ENCODE measurements at regions of chr1 and their contacts with region 1.

Region 1: GRCh38 chr1:234373064-234373958 is at the start of gene COA6:
- DNase-seq: peak; percentile 72 to 98 (median 88)
- ATAC-seq: peak; percentile 84 to 85
- H3K4me3 Mint-ChIP-seq: peak within 1 kb of the TSS; percentile 94 to 99 (median 97)
- H3K27ac Mint-ChIP-seq: peak within 1 kb of the TSS; percentile 96 to 100 (median 99)
- H3K4me1 Mint-ChIP-seq: peaks cover 19 to 54% (median 49%) of the 10 kb centered on the region in 4 donors
- H3K27me3 Mint-ChIP-seq: no peaks in the 10 kb centered on the region
- polyA plus RNA-seq, gene COA6: 29.1 to 32.6 (median 32.0) TPM

Region 2: GRCh38 chr1:234135501-234135900 is 237.8 kb before region 1 on chr1:
- POLR2A ChIA-PET with region 1: no interaction called
- DNase-seq: no peak
- ATAC-seq: no peak
- H3K4me3 Mint-ChIP-seq: no peak overlapping the region
- H3K27ac Mint-ChIP-seq: no peak overlapping the region
- H3K4me1 Mint-ChIP-seq: no peaks in the 10 kb centered on the region
- H3K27me3 Mint-ChIP-seq: peaks cover 5 to 11% (median 10%) of the 10 kb centered on the region in 5 donors

Region 3: GRCh38 chr1:234222561-234223280 is 150.6 kb before region 1 on chr1:
- POLR2A ChIA-PET with region 1: no interaction called
- DNase-seq: no peak
- ATAC-seq: no peak
- H3K4me3 Mint-ChIP-seq: no peak overlapping the region
- H3K27ac Mint-ChIP-seq: no peak overlapping the region
- H3K4me1 Mint-ChIP-seq: peaks cover 0 to 2% (median under 1%) of the 10 kb centered on the region in 4 donors
- H3K27me3 Mint-ChIP-seq: peaks cover 3 to 12% (median 6%) of the 10 kb centered on the region in 5 donors

Region 4: DNA sequence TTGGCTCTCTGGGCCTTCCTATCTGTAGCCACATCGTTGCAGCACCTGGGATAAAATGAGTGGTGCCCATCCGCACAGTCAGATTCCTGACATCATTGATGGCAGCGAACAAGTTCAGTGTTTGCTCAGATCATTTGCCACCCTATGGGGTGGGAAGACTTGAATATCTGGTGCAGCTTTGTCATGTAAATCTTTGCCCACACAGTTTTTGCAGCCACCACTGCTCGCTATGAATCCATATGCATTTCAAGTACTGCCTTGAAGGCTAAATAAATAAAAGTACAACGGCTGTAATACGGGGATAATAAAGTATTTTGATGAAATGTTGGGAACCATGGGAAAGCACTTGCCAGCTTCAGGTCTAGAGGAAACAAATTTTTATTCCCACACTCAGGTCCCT is 56.4 kb before region 1 on chr1:
- POLR2A ChIA-PET with region 1: interaction called, 12 read pairs
- DNase-seq: no peak
- ATAC-seq: no peak
- H3K4me3 Mint-ChIP-seq: peak overlapping the region in 1 of 10 donors; percentile 29
- H3K27ac Mint-ChIP-seq: peak overlapping the region in 8 of 10 donors; percentile 37 to 99 (median 96)
- H3K4me1 Mint-ChIP-seq: peaks cover 16 to 66% (median 60%) of the 10 kb centered on the region in 4 donors
- H3K27me3 Mint-ChIP-seq: peaks cover 0 to 7% (median 0%) of the 10 kb centered on the region in 5 donors

Region 5: DNA sequence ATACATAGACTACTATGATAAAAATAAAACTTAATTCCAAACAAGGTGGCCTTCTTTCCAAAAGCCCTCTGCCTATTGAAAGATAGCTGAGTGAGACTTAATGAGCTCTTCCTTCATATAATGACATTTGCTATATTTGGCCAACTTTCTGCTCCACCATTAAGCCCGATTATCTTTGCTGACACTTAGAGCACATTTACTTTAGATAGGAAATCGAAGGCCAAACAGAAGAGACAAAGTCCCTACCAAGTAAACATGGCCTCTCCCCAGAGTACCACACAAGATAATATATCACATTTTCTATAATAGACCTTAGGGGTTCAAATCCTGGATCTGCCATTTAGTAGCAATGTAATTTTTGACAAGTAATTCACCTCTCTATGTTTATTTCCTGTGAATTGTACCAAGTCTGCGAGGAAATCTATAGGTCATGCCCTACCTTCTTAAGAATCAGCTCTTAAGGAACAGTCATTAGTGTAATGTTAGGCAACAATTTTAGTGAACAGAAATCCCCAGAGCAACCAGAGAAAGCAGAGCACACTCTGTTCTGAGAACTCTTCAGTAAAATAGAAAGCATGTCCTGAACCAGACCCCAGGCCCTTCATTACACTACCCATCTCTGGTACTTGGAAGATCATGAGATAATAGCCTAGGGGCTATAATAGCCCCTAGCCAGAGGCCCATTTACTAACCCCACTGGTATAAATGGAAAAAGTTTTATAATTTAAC is 17.4 kb before region 1 on chr1:
- POLR2A ChIA-PET with region 1: interaction called, 28 read pairs
- DNase-seq: no peak
- ATAC-seq: no peak
- H3K4me3 Mint-ChIP-seq: peak overlapping the region in 6 of 10 donors; percentile 31 to 88 (median 76)
- H3K27ac Mint-ChIP-seq: peak overlapping the region in 5 of 10 donors; percentile 32 to 95 (median 78)
- H3K4me1 Mint-ChIP-seq: peaks cover 3 to 16% (median 13%) of the 10 kb centered on the region in 4 donors
- H3K27me3 Mint-ChIP-seq: peaks cover 0 to 11% (median 3%) of the 10 kb centered on the region in 5 donors

Region 6: DNA sequence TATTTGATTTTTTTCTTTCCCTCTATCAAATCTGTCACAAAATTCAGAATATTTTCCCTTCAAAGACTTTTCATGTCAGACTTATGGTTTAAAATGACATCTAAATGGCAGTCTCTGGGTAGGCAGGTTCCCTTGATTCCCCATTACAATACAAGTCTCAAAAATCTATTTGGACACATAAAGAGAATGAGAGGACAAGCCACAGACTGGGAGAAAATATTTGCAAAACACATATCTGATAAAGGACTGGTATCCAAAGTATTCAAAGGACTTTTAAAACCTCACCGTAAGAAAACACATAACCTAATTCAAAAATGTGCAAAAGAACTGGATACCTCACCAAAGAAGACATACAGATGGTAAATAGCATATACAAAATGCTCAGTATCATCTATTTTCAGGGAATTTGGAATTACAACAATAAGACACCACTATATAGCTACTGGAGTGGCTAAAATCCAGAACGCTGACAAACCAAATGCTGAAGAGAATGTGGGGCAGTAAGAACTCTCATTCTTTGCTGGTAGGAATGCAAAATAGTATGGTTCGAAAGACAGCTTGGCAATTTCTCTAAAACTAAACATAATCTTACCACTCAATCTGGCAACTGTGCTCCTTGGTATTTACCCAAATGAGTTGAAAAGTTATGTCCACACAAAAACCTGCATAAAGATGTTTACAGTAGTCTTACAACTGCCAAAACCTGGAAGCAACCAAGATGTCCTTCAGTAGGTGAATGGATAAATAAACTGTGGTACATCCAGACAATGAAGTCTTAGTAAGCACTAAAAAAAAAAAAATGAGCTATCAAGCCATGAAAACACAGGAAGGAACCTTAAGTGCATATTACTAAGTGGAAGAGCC is 79.0 kb after region 1 on chr1:
- POLR2A ChIA-PET with region 1: no interaction called
- DNase-seq: no peak
- ATAC-seq: no peak
- H3K4me3 Mint-ChIP-seq: no peak overlapping the region
- H3K27ac Mint-ChIP-seq: peak overlapping the region in 1 of 10 donors; percentile 13
- H3K4me1 Mint-ChIP-seq: peaks cover 0 to 7% (median 1%) of the 10 kb centered on the region in 4 donors
- H3K27me3 Mint-ChIP-seq: no peaks in the 10 kb centered on the region

Region 7: GRCh38 chr1:234478481-234479309 is 105.4 kb after region 1 on chr1 and contains the start of gene TARBP1:
- POLR2A ChIA-PET with region 1: interaction called, 30 read pairs
- DNase-seq: peak; percentile 66 to 87 (median 76)
- ATAC-seq: peak; percentile 67 to 68
- H3K4me3 Mint-ChIP-seq: peak within 1 kb of the TSS; percentile 81 to 93 (median 90)
- H3K27ac Mint-ChIP-seq: peak within 1 kb of the TSS; percentile 61 to 96 (median 92)
- H3K4me1 Mint-ChIP-seq: peaks cover 14 to 42% (median 42%) of the 10 kb centered on the region in 4 donors
- H3K27me3 Mint-ChIP-seq: peaks cover 0 to 19% (median 6%) of the 10 kb centered on the region in 5 donors
- polyA plus RNA-seq, gene TARBP1: 12.8 to 15.6 (median 13.2) TPM

Region 8: GRCh38 chr1:234489007-234489697 is 115.8 kb after region 1 on chr1:
- POLR2A ChIA-PET with region 1: no interaction called
- DNase-seq: no peak
- ATAC-seq: no peak
- H3K4me3 Mint-ChIP-seq: no peak overlapping the region
- H3K27ac Mint-ChIP-seq: no peak overlapping the region
- H3K4me1 Mint-ChIP-seq: peaks cover 5 to 28% (median 20%) of the 10 kb centered on the region in 4 donors
- H3K27me3 Mint-ChIP-seq: no peaks in the 10 kb centered on the region